ENCODE measurements at regions of chr6 and their contacts with region 1.

Region 1: GRCh38 chr6:137121401-137121997 is 51.9 kb downstream of the IL22RA2 start:
- DNase-seq: no peak
- ATAC-seq: peak; percentile 58
- H3K4me3 Mint-ChIP-seq: peak overlapping the region; percentile 70
- H3K27ac Mint-ChIP-seq: peak overlapping the region; percentile 91
- H3K4me1 Mint-ChIP-seq: peaks cover 44% of the 10 kb centered on the region
- H3K27me3 Mint-ChIP-seq: no peaks in the 10 kb centered on the region
- CTCF ChIP-seq: no peak

Region 2: GRCh38 chr6:136751522-136751956 is 370.0 kb before region 1 on chr6:
- CTCF ChIA-PET with region 1: no interaction called
- POLR2A ChIA-PET with region 1: no interaction called
- intact Hi-C with region 1: no loop called
- DNase-seq: no peak
- ATAC-seq: peak; percentile 93
- H3K4me3 Mint-ChIP-seq: peak overlapping the region; percentile 60
- H3K27ac Mint-ChIP-seq: peak overlapping the region; percentile 82
- H3K4me1 Mint-ChIP-seq: peaks cover 63% of the 10 kb centered on the region
- H3K27me3 Mint-ChIP-seq: no peaks in the 10 kb centered on the region
- CTCF ChIP-seq: no peak

Region 3: DNA sequence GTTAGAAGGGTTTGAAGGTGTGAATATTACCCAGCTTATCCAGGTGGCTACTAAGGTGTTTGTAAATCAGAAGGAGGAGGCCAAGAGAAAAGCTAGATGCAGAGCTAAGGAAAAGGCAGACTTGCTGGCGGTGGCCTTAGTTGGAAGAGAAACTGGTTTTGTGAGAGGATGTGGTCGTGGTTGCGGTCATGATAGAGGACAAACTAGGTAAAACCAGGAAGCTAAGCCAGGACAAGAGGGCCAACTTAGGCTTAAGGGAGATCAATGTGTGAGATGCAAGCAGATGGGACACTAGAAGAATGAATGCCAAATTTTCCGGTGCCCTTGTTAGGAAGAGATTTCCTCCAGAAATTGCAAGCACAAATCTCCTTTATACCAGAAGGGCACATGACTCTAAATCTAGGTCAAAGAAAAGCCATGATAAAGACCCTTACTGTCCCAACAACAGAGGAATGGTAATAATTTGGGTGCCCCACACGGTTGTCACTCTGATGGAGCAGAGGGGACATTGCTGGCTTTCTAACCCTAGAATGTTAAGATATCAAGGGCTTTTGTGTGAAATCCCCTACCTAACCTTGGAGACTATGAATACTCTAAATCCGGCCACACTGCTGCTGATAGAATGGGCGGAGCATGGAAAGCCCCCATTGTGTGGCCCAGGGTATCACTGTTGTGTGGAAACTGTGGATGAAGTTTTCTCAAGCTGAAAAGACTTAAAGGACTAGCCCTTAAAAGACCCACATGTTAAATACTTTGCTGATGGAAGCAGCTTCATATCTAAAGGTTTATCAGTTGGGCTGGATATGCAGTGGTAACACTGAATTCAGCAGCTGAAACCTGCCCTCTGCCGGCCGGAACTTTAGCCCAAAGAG is 44.1 kb after region 1 on chr6:
- CTCF ChIA-PET with region 1: interaction called, 10 read pairs
- POLR2A ChIA-PET with region 1: interaction called, 4 read pairs
- intact Hi-C with region 1: no loop called
- DNase-seq: peak; percentile 28
- ATAC-seq: peak; percentile 81
- H3K4me3 Mint-ChIP-seq: peak overlapping the region; percentile 45
- H3K27ac Mint-ChIP-seq: peak overlapping the region; percentile 92
- H3K4me1 Mint-ChIP-seq: peaks cover 75% of the 10 kb centered on the region
- H3K27me3 Mint-ChIP-seq: no peaks in the 10 kb centered on the region
- CTCF ChIP-seq: no peak